T-cell (primary cell): ENCODE measurements at regions of chr19 and their contacts with region 1.

Region 1: DNA sequence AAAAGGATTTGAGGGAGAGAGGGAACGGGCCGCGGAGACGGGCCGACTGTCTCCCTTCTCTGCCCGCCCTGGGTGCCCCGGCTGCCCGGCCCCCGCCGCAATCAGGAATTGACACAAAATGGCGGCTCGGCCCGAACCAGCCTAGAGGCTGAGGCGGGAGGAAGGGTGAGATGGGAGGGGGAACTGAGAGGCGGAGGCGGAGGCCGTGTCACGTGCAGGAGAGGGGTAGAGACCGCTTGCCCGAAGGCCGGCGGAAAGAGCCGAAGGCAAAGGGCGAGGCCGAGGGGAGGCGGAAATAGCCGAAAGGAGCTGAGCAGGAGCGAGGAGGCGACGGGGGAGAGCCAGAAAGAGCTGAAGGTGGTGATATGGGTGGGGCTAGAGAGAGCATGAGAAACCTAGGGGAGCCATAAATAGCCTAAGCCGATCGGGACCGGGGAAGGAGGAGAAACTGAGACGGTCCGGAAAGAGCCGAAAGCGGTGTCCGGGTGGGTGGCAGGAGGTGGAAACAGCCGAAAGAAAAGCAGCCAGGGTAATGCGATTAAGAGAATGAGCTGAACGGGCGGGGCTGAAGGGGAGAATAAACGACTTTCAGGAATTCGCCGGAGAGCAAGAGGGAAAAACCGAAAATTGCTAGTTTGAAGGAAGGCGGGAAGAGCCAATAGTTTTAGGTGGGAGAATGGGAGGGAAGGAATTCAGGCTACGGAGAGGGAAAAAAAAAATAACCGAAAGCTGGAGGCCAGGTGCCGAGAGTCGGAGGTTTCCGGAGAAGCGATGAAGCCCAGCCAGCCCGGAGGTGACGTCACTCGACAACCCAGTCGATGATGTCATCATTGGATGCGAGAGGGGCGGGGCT is at the start of gene ZC3H4:
- DNase-seq: peak; percentile 98 to 100 (median 99)
- ATAC-seq: peak; percentile 79 to 84 (median 82)
- H3K4me3 ChIP-seq: peak within 1 kb of the TSS; percentile 79 to 80
- H3K4me3 Mint-ChIP-seq: peak within 1 kb of the TSS; percentile 92 to 99 (median 95)
- H3K27ac ChIP-seq: peak within 1 kb of the TSS; percentile 98
- H3K27ac Mint-ChIP-seq: peak within 1 kb of the TSS; percentile 100
- H3K4me1 ChIP-seq: peaks cover 25 to 26% of the 10 kb centered on the region in 2 experiments
- H3K4me1 Mint-ChIP-seq: peaks cover 33 to 36% (median 35%) of the 10 kb centered on the region in 3 donors
- H3K27me3 ChIP-seq: no peaks in the 10 kb centered on the region
- H3K27me3 Mint-ChIP-seq: no peaks in the 10 kb centered on the region
- total RNA-seq, gene ZC3H4: 64.0 to 81.4 (median 72.3) TPM

Region 2: GRCh38 chr19:46600384-46601317 is 512.6 kb before region 1 on chr19:
- CTCF ChIA-PET with region 1: no interaction called
- POLR2A ChIA-PET with region 1: no interaction called
- DNase-seq: peak; percentile 88 to 99 (median 96)
- ATAC-seq: peak; percentile 85 to 89 (median 88)
- H3K4me3 ChIP-seq: peak overlapping the region; percentile 83 to 86
- H3K4me3 Mint-ChIP-seq: peak overlapping the region; percentile 90 to 99 (median 97)
- H3K27ac ChIP-seq: peak overlapping the region; percentile 100
- H3K27ac Mint-ChIP-seq: peak overlapping the region; percentile 100
- H3K4me1 ChIP-seq: peaks cover 7 to 47% of the 10 kb centered on the region in 2 experiments
- H3K4me1 Mint-ChIP-seq: peaks cover 32 to 47% (median 34%) of the 10 kb centered on the region in 3 donors
- H3K27me3 ChIP-seq: no peaks in the 10 kb centered on the region
- H3K27me3 Mint-ChIP-seq: peaks cover 0 to 2% of the 10 kb centered on the region in 2 donors

Region 3: GRCh38 chr19:47081111-47081510 is 32.1 kb before region 1 on chr19:
- CTCF ChIA-PET with region 1: interaction called in 1 of 2 experiments, 14 read pairs
- POLR2A ChIA-PET with region 1: interaction called in 1 of 2 experiments, 9 read pairs
- DNase-seq: no peak
- ATAC-seq: no peak
- H3K4me3 ChIP-seq: no peak overlapping the region
- H3K4me3 Mint-ChIP-seq: no peak overlapping the region
- H3K27ac ChIP-seq: no peak overlapping the region
- H3K27ac Mint-ChIP-seq: no peak overlapping the region
- H3K4me1 ChIP-seq: no peaks in the 10 kb centered on the region
- H3K4me1 Mint-ChIP-seq: peaks cover 0 to 2% (median 0%) of the 10 kb centered on the region in 3 donors
- H3K27me3 ChIP-seq: no peaks in the 10 kb centered on the region
- H3K27me3 Mint-ChIP-seq: no peaks in the 10 kb centered on the region

Region 4: DNA sequence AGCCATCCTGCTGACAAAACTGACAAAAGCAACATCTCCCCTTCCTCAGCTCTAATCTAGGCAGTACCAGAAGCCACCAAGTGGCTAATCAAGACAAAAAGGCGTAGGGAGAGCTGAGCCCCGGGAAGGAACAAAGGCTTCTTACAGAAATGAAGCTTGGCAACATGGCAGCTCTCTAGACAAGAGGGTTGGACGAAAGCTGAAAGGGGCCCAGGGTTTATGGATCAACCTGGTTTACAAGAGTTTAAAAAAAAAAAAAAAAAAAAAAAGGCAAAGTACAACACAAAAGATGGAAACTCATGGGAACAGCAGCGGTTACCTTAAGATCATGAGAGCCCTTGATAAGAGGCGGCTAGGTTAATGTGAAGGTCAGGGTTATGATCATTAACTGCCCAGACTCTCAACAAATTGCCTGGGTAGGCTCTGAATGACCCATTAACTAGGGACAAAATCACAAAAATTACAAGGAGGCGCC is 13.6 kb before region 1 on chr19:
- CTCF ChIA-PET with region 1: no interaction called
- POLR2A ChIA-PET with region 1: interaction called in 1 of 2 experiments, 10 read pairs
- DNase-seq: no peak
- ATAC-seq: no peak
- H3K4me3 ChIP-seq: no peak overlapping the region
- H3K4me3 Mint-ChIP-seq: no peak overlapping the region
- H3K27ac ChIP-seq: no peak overlapping the region
- H3K27ac Mint-ChIP-seq: no peak overlapping the region
- H3K4me1 ChIP-seq: peaks cover 8 to 46% of the 10 kb centered on the region in 2 experiments
- H3K4me1 Mint-ChIP-seq: peaks cover 58 to 69% (median 64%) of the 10 kb centered on the region in 3 donors
- H3K27me3 ChIP-seq: no peaks in the 10 kb centered on the region
- H3K27me3 Mint-ChIP-seq: no peaks in the 10 kb centered on the region

Region 5: DNA sequence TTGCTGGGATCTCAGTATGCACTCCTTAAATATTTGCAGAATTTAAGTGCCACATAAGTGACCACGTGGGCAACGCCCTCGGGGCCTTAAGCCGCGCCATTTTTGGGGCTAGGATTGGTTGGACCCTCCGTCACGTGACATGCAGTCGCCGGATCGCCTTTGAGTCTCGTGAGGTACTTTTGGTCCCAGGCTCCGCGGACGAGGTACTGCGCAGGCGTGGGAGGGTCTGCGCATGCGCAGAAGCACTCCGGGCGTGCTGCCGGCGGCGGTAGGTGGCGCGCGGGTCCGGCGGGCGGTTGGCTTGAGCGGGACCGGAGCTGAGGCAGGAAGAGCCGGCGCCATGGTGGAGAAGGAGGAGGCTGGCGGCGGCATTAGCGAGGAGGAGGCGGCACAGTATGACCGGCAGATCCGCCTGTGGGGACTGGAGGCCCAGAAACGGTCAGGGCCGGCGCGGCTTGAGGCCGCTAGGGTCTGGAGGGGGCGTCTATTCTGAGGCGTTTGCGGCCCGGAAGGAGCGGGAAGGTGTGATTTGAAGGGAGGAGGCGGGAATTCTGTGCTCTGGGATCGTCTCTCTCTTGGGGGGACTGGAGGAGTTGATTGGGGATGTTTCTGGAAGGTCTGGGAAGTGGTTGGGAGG is 17.5 kb after region 1 on chr19 and contains the start of gene SAE1:
- CTCF ChIA-PET with region 1: interaction called in 1 of 2 experiments, 11 read pairs
- POLR2A ChIA-PET with region 1: no interaction called
- DNase-seq: peak; percentile 75 to 95 (median 85)
- ATAC-seq: peak; percentile 87 to 92 (median 90)
- H3K4me3 ChIP-seq: peak within 1 kb of the TSS; percentile 71 to 90
- H3K4me3 Mint-ChIP-seq: peak within 1 kb of the TSS; percentile 98 to 100 (median 99)
- H3K27ac ChIP-seq: peak within 1 kb of the TSS; percentile 52
- H3K27ac Mint-ChIP-seq: peak within 1 kb of the TSS; percentile 89 to 97
- H3K4me1 ChIP-seq: peaks cover 4 to 41% of the 10 kb centered on the region in 2 experiments
- H3K4me1 Mint-ChIP-seq: peaks cover 49 to 56% (median 53%) of the 10 kb centered on the region in 3 donors
- H3K27me3 ChIP-seq: no peaks in the 10 kb centered on the region
- H3K27me3 Mint-ChIP-seq: no peaks in the 10 kb centered on the region
- total RNA-seq, gene SAE1: 42.6 to 54.9 (median 44.0) TPM

Region 6: DNA sequence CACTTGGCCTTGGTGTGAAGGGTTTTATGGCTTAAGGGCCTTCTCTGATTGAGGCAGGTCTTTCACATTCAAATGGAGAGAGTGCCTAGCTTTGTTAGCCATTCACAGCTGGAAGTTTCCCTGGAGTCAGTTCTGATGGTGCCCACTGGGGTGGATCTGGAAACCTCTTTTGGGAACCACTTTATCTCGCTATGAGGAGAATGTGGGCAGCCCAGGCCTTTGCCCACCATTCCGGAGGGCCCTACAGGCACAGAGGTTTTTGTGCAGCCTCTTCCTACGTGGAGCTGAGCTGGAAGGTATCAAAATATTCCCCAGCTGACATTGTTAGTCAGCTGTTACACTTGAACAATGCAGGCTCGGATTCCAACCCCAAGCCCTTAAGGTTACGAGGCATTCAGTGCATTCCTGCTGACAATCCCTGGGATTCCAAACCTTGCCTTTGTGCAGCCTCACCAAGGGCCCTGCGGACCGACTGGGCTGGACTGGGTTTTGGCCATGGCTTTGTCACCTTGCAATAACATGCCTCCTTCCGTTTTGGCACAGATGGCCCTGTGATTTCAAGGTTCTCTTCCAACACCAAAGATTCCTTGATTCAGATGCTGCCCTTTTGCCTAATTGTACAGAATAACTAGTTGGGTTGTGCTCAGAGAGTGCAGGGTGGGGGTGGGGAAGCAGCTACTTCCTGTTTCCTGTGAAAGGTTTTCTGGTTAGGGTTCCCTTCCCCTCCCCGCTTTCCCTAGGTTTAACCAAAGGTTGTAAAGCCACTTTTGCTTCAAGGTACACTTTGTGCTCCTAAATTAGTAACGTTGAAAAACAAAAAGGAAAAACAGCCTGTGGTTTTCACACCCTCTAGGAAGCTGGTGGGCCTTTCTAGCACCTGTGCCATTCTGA is 44.5 kb after region 1 on chr19:
- CTCF ChIA-PET with region 1: no interaction called
- POLR2A ChIA-PET with region 1: interaction called, 4 to 11 read pairs
- DNase-seq: peak in 33 of 35 experiments; percentile 9 to 72 (median 39)
- ATAC-seq: peak; percentile 32 to 50 (median 38)
- H3K4me3 ChIP-seq: peak overlapping the region; percentile 6 to 29
- H3K4me3 Mint-ChIP-seq: peak overlapping the region; percentile 29 to 80 (median 61)
- H3K27ac ChIP-seq: peak overlapping the region; percentile 68
- H3K27ac Mint-ChIP-seq: peak overlapping the region; percentile 92 to 94
- H3K4me1 ChIP-seq: peaks cover 59 to 76% of the 10 kb centered on the region in 2 experiments
- H3K4me1 Mint-ChIP-seq: peaks cover 66 to 74% (median 68%) of the 10 kb centered on the region in 3 donors
- H3K27me3 ChIP-seq: no peaks in the 10 kb centered on the region
- H3K27me3 Mint-ChIP-seq: no peaks in the 10 kb centered on the region